Left cardiac atrium (tissue), 4 donors: ENCODE measurements at regions of chr14 and their contacts with region 1.

Region 1: DNA sequence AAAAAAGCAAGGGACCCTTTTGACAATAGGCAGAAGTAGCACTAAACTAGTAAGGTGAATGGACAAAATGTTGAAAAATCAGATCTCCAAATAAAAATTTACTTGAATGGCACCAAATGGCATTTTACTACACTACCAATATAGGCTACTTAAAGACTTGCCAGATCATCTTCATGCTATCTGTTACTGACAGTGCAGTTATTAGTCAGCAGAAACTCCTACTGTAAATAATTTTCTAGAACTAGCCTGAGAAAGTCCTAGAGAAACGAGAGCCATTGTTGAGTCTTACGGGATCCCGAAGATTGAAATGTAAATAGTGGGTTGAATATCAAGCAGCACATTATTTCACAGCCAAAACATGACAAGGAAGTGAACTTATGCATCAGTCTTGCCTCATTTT is 350.3 kb downstream of the SEC23A start:
- DNase-seq: no peak
- ATAC-seq: no peak

Region 2: DNA sequence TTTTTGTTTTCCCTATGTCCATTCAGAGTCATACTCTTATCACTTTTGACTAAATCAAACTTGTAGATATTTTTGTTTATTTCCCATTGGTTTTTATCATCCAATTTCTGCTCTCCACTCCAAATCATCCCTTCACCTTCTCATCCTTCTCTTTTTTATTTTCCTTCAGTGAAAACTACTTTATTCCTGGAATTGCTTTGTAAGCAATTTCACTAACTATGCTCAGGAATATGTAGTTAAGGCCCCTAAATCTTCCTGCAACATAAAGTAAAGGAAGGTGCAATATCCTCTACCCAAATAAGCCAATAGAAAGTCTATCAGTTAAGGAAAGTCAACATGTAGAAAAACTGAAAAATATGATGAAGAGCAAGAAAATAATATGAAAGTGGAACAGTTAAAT is 41.9 kb after region 1 on chr14:
- intact Hi-C with region 1: loop called in 1 of 2 experiments (anchors 1 kb)
- DNase-seq: no peak
- ATAC-seq: no peak

Region 3: DNA sequence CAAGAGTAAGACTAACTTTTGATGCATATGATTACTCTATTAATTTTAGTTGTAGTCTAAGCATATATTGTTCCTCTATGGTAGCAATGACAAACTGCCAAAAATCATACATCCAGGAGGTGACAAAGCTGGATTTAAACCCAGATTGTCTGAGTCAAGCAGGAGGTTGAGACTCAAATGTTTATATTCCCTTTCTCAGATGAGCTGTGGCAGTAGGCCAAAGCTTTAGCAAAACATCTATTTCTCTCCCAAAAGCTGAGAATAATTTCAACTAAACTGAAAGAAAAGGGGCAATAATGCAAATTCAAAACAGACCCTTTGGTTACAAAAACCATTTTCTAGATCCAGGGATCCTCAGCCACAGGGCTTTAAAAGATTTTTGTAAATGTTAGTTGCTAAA is 176.7 kb after region 1 on chr14:
- intact Hi-C with region 1: no loop called
- DNase-seq: no peak
- ATAC-seq: no peak

Region 4: GRCh38 chr14:40139657-40140056 is 1386.9 kb after region 1 on chr14:
- intact Hi-C with region 1: no loop called
- DNase-seq: no peak
- ATAC-seq: no peak